Activated B cell treated with CpG ODN at 0.5 μM for 24 hours (primary cell): ENCODE measurements at regions of chr13 and their contacts with region 1.

Region 1: DNA sequence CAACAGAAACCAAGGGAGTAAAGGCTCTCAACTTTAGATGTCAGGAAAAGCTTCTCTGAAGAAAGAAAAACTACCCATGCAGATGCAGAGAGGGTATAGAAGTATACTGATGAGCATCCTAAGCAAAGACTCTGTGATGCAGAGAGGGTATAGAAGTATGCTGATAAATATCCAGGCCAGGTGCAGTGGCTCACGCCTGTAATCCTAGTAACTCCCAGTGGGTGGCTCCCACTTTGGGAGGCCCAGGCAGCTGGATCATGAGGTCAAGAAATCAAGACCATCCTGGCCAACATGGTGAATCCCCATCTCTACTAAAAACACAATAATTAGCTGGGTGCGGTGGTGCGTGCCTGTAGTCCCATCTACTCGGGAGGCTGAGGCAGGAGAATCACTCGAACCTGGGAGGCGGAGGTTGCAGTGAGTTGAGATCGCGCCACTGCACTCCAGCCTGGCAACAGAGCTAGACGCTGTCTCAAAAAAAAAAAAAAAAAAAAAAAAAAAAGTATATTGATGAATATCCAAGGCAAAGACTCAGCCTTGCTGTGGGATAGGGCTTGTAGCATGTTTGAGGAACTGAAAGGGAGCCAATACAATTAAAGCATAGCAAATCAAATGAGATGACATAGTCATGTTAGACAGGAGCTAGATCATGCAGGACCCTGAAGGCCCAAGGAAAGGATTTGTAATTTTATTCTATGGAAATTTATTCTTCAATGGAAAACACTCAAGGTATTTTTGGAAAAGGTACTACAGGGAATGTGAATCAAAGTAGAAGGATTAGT is 14.9 kb downstream of the UBL3 start:
- DNase-seq: no peak
- ATAC-seq: peak; percentile 94
- H3K4me3 Mint-ChIP-seq: no peak overlapping the region
- H3K27ac Mint-ChIP-seq: no peak overlapping the region
- H3K4me1 Mint-ChIP-seq: peaks cover 56% of the 10 kb centered on the region
- H3K27me3 Mint-ChIP-seq: no peaks in the 10 kb centered on the region
- CTCF ChIP-seq: no peak

Region 2: GRCh38 chr13:29754473-29754806 is 81.0 kb before region 1 on chr13:
- CTCF ChIA-PET with region 1: no interaction called
- POLR2A ChIA-PET with region 1: no interaction called
- intact Hi-C with region 1: no loop called
- DNase-seq: no peak
- ATAC-seq: no peak
- H3K4me3 Mint-ChIP-seq: no peak overlapping the region
- H3K27ac Mint-ChIP-seq: no peak overlapping the region
- H3K4me1 Mint-ChIP-seq: peaks cover 17% of the 10 kb centered on the region
- H3K27me3 Mint-ChIP-seq: peaks cover 5% of the 10 kb centered on the region
- CTCF ChIP-seq: no peak

Region 3: DNA sequence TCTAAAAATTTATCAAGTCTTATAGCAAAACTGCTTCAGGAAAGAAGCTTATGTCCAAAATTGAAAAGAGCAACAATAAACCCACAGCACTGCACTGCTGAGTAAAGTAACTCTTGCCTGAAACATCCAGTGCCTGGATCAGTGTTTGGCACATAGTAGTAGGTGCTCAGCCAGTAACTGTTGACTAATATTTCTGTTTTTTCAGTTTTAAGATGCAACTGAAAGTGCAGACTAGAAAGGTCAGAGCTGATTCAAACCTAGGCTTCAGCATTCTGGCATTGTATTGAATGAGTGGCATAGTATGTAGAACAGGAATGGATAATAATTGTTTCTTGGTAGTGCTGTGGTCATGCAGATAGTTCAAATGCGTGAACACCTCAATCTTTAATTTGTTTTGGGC is 52.7 kb before region 1 on chr13:
- CTCF ChIA-PET with region 1: no interaction called
- POLR2A ChIA-PET with region 1: interaction called, 10 read pairs
- intact Hi-C with region 1: no loop called
- DNase-seq: no peak
- ATAC-seq: no peak
- H3K4me3 Mint-ChIP-seq: no peak overlapping the region
- H3K27ac Mint-ChIP-seq: no peak overlapping the region
- H3K4me1 Mint-ChIP-seq: peaks cover 24% of the 10 kb centered on the region
- H3K27me3 Mint-ChIP-seq: no peaks in the 10 kb centered on the region
- CTCF ChIP-seq: no peak

Region 4: GRCh38 chr13:29817604-29818378 is 17.7 kb before region 1 on chr13:
- CTCF ChIA-PET with region 1: interaction called, 3 read pairs
- POLR2A ChIA-PET with region 1: interaction called, 3 read pairs
- intact Hi-C with region 1: loop called (anchors 2 kb)
- DNase-seq: no peak
- ATAC-seq: peak; percentile 98
- H3K4me3 Mint-ChIP-seq: peak overlapping the region; percentile 68
- H3K27ac Mint-ChIP-seq: peak overlapping the region; percentile 73
- H3K4me1 Mint-ChIP-seq: peaks cover 66% of the 10 kb centered on the region
- H3K27me3 Mint-ChIP-seq: no peaks in the 10 kb centered on the region
- CTCF ChIP-seq: no peak